BJ (cell line): ENCODE measurements at regions of chr4 and their contacts with region 1.

Region 1: DNA sequence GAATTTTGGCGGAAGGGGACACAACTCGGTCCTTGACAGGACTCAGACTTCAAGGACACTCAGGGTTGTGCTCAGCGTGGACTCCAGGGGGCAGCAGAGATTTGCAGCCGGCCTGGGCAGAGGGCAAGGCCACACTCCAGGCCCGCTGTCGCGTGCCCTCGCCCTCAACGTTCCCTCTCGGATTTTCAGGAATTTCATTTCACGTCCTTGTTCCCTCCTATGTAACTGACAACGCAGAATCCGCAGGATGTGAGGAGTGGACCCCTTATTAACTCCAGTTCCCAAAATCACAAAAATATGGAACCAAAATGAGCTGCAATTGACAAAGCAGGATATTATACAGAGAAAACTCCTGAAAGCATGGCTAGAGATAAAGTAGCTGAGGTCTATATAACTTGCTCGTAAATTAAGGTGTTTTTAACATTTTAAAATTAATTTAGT is 21.0 kb upstream of the DCTD start:
- DNase-seq: no peak
- H3K4me3 ChIP-seq: no peak overlapping the region
- H3K27me3 ChIP-seq: peaks cover 6% of the 10 kb centered on the region
- CTCF ChIP-seq: peak; percentile 96

Region 2: GRCh38 chr4:182454440-182455013 is 483.7 kb before region 1 on chr4:
- CTCF ChIA-PET with region 1: no interaction called
- POLR2A ChIA-PET with region 1: no interaction called
- DNase-seq: no peak
- H3K4me3 ChIP-seq: no peak overlapping the region
- H3K27me3 ChIP-seq: peaks cover 2% of the 10 kb centered on the region
- CTCF ChIP-seq: no peak

Region 3: DNA sequence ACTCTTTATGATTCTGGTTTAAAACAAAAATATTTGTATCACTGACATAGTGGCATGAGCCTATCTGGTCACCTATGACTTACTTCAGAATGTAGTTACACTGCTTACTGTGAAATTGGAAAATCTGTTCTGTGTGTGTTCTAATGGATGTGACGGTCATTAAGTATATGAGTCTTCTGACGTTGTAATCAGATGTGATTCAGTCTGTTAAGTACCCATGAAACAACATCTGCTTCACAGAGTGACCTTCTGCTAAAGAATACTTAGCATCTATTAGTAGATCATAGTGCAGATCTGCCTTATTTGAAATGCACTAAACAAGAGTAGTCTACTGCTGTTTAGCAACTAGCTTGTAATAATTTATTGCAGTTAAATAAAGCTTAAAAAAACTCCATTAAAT is 338.1 kb before region 1 on chr4:
- CTCF ChIA-PET with region 1: no interaction called
- POLR2A ChIA-PET with region 1: no interaction called
- DNase-seq: peak; percentile 13
- H3K4me3 ChIP-seq: no peak overlapping the region
- H3K27me3 ChIP-seq: no peaks in the 10 kb centered on the region
- CTCF ChIP-seq: no peak

Region 4: DNA sequence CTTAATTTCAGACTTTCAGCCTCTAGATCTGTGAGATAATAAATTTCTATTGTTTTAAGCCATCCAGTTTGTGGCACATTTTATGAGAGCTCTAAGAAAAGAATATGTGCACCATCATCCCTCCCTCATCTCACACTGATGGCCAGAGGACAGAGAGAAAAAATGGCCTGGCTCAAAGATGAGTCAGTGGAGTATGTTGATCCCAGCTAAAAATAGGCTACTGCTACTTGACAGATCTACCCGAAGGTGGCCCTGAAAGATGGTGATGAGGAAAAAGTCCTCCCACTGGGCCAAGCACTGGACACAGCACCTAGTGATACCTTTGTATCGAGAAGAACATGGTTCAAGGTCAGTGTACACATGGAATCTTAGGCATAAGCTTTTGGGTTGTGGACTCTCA is 17.2 kb after region 1 on chr4:
- CTCF ChIA-PET with region 1: interaction called, 38 read pairs
- POLR2A ChIA-PET with region 1: no interaction called
- DNase-seq: peak; percentile 11
- H3K4me3 ChIP-seq: no peak overlapping the region
- H3K27me3 ChIP-seq: no peaks in the 10 kb centered on the region
- CTCF ChIP-seq: no peak

Region 5: DNA sequence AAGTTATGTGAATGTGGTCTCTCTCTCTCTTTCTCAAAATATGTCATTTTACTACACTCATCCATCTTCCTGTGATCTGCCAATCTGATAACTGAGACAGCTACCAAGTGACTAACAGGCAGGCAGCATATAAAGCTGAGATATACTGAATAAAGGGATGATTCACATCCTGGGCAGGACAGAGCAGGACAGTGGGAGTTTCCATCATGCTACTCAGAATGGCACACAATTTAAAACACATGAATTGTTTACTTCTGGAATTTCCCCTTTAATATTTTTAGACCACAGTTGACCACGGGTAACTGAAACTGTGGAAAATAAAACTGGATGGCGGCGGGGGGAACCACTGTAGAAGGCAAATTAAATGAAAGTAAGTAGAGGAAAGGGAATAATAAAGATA is 37.6 kb after region 1 on chr4:
- CTCF ChIA-PET with region 1: interaction called, 12 read pairs
- POLR2A ChIA-PET with region 1: no interaction called
- DNase-seq: peak; percentile 76
- H3K4me3 ChIP-seq: no peak overlapping the region
- H3K27me3 ChIP-seq: no peaks in the 10 kb centered on the region
- CTCF ChIP-seq: no peak

Region 6: DNA sequence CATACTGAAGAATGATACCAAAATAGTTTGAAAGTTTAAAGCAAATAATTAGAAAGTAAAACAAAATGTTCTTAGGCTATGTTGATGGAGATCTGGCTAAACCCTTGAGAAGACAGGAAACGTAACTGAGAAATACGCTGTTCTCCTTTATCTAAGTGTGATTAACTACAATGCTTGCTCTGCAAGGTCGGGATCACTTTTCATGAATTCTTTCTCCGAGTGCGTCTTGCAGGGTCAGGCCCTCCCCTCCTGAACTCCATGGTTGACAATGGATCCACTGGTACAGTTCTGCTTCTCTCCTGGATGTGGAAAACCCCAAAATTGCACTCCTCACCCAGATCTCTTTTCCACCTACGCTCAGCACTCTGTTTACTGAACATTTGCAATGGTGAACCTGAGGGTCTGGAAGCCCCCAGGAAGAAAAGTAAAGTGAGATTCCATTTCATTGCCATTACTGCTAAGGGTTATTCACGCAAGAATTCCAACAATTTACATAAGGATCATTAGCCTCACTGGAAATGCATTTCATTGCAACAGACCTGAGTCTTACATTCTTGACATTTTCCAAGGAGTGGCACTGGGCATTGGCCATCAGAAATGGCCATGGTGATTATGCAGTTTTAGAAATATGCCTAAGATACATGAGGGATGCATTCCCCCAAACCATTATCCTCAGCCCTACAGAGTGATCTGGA is 136.2 kb after region 1 on chr4:
- CTCF ChIA-PET with region 1: interaction called, 28 read pairs
- POLR2A ChIA-PET with region 1: no interaction called
- DNase-seq: no peak
- H3K4me3 ChIP-seq: no peak overlapping the region
- H3K27me3 ChIP-seq: no peaks in the 10 kb centered on the region
- CTCF ChIP-seq: no peak

Region 7: DNA sequence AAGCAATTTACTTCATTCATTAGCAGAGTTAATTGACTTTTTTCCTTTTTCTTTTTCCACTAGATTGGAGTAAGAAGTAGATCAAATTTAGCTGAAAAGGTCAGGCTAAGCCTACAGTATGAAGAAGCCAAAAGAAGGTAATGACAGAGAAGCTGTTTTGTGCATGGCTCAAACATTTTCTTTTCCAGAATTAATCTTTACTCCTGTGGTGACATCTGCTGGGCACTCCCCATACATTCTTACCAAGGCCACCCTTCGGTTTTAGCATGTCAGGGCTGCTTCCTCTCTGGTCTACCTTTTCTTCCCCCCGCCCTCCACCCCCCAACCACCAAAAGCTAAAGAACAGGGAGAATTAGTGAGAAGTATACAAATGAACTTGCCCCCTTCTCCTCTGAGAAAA is 311.6 kb after region 1 on chr4:
- CTCF ChIA-PET with region 1: interaction called, 146 read pairs
- POLR2A ChIA-PET with region 1: no interaction called
- DNase-seq: no peak
- H3K4me3 ChIP-seq: no peak overlapping the region
- H3K27me3 ChIP-seq: no peaks in the 10 kb centered on the region
- CTCF ChIP-seq: peak; percentile 47